Posterior vena cava (tissue), 2 donors: ENCODE measurements at regions of chr7 and their contacts with region 1.

Region 1: GRCh38 chr7:16261100-16261499 is 160.2 kb downstream of the CRPPA start:
- DNase-seq: no peak

Region 2: GRCh38 chr7:16234493-16235146 is 26.5 kb before region 1 on chr7:
- intact Hi-C with region 1: loop called in 1 of 2 experiments (anchors 1 kb)
- DNase-seq: no peak